GM18951 (cell line): ENCODE measurements at regions of chr1 and their contacts with region 1.

Region 1: GRCh38 chr1:35777109-35777508 is 7.3 kb upstream of the CLSPN start:
- POLR2A ChIP-seq: no peak

Region 2: GRCh38 chr1:35573198-35574090 is 203.7 kb before region 1 on chr1 and contains the start of gene TFAP2E:
- in situ Hi-C with region 1: loop called (anchors 5 kb)
- POLR2A ChIP-seq: no peak